ENCODE measurements at regions of chr16 and their contacts with region 1.

Region 1: DNA sequence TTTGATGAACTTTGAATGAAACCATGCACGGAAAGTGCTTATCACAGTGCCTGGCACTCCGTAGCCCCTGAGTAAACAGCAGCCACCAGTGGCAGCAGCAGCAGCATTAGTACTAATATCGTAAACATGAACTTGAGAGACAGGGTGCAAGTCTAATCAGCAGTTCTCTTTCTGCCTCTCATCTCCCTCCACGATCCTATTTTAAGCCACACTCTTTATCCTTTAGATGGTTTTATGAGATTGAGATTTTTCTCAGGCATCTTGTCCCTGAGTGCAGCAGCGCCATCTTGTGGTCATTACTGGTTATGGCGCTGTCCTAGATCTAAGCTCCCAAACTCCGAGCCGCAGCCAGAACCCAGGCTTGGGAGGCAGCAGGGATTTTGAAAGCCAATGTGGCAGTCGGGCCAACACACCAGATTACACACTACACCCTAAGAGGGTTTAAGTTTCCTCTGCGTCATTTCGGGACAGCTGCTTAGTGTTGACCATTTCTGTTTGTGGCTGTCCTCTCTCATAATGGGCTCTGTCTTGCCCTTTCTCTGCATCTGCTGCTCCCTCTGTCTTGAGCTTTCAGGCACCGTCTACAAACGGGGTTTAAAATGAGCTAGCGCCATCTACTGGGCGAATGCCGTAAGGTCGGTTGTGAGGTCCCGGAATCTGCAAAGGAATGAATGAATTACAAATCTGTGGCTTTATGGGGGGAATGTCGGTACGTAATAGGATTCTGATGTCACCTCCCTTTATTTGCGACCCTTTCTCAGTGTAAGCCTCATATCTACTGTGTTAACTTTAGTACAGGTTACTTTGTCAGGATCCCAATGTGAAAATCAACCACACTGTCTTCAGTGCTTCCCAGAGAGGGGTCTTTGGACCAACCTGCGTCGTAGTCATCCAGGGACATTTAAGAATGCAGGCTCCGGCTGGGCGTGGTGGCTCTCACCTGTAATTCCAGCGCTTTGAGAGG is 64.5 kb downstream of the CYLD start:
- DNase-seq: peak; percentile 69 to 93 (median 86)
- ATAC-seq: peak; percentile 96
- H3K4me3 ChIP-seq: peak overlapping the region; percentile 36 to 38
- H3K4me3 Mint-ChIP-seq: peak overlapping the region; percentile 81
- H3K27ac ChIP-seq: no peak overlapping the region
- H3K27ac Mint-ChIP-seq: peak overlapping the region; percentile 88
- H3K4me1 ChIP-seq: peaks cover 3% of the 10 kb centered on the region
- H3K4me1 Mint-ChIP-seq: peaks cover 11% of the 10 kb centered on the region
- H3K27me3 ChIP-seq: no peaks in the 10 kb centered on the region
- H3K27me3 Mint-ChIP-seq: no peaks in the 10 kb centered on the region
- CTCF ChIP-seq: peak; percentile 96

Region 2: GRCh38 chr16:50065624-50066481 is 740.5 kb before region 1 on chr16 and contains the start of gene HEATR3:
- CTCF ChIA-PET with region 1: interaction called, 3 read pairs
- POLR2A ChIA-PET with region 1: no interaction called
- intact Hi-C with region 1: loop called in 1 of 2 experiments (anchors 10 kb)
- DNase-seq: peak; percentile 88 to 97 (median 93)
- ATAC-seq: peak; percentile 86
- H3K4me3 ChIP-seq: peak within 1 kb of the TSS; percentile 78 to 92
- H3K4me3 Mint-ChIP-seq: peak within 1 kb of the TSS; percentile 93
- H3K27ac ChIP-seq: peak within 1 kb of the TSS; percentile 73 to 79
- H3K27ac Mint-ChIP-seq: peak within 1 kb of the TSS; percentile 92
- H3K4me1 ChIP-seq: peaks cover 17% of the 10 kb centered on the region
- H3K4me1 Mint-ChIP-seq: peaks cover 42% of the 10 kb centered on the region
- H3K27me3 ChIP-seq: no peaks in the 10 kb centered on the region
- H3K27me3 Mint-ChIP-seq: no peaks in the 10 kb centered on the region
- CTCF ChIP-seq: no peak
- total RNA-seq, gene HEATR3: 9.3 to 11.4 TPM

Region 3: GRCh38 chr16:50360033-50360778 is 446.2 kb before region 1 on chr16:
- CTCF ChIA-PET with region 1: interaction called, 12 read pairs
- POLR2A ChIA-PET with region 1: no interaction called
- intact Hi-C with region 1: loop called (anchors 5 kb)
- DNase-seq: no peak
- ATAC-seq: no peak
- H3K4me3 ChIP-seq: no peak overlapping the region
- H3K4me3 Mint-ChIP-seq: no peak overlapping the region
- H3K27ac ChIP-seq: no peak overlapping the region
- H3K27ac Mint-ChIP-seq: peak overlapping the region; percentile 87
- H3K4me1 ChIP-seq: peaks cover 30% of the 10 kb centered on the region
- H3K4me1 Mint-ChIP-seq: peaks cover 67% of the 10 kb centered on the region
- H3K27me3 ChIP-seq: no peaks in the 10 kb centered on the region
- H3K27me3 Mint-ChIP-seq: no peaks in the 10 kb centered on the region
- CTCF ChIP-seq: no peak

Region 4: DNA sequence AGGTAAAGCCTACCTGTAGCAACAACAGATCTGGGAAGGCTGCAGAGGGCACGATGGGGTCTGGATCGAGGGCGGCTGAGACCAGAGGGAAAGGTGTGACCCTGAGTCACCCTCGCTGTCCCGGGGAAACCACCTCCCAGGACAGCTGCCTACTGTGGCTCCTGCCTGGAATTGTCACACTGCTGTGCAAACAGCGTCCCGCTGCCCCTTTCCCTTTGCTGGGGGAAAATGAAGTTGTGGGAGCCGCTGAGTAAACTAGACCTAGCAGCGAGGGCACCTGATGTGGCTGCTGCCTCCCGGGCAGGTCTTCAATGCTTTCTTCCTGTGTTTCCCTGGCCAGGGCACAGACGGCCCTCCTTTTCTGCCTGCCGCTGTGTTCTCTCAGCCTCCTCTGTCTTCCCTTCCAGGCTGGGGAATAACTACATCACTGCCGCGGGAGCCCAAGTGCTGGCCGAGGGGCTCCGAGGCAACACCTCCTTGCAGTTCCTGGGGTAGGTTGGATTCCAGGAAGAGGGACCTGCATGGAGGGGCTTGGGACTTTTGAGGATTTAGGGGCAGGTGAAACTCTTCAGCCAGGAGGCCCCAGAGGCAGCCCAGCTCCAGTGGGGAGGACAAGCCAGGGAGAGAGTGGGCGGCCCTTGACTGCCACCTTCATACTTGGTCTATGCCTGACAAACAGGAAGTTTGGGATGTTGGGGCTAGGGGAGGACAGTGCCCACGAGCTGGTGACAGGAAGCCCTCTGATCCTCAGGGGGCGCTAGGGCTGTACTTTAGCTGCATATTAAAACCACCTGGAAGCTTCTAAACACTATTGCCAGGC is 86.7 kb before region 1 on chr16:
- CTCF ChIA-PET with region 1: interaction called, 20 read pairs
- POLR2A ChIA-PET with region 1: interaction called, 5 read pairs
- intact Hi-C with region 1: no loop called
- DNase-seq: peak in 6 of 9 experiments; percentile 23 to 71 (median 46)
- ATAC-seq: peak; percentile 67
- H3K4me3 ChIP-seq: no peak overlapping the region
- H3K4me3 Mint-ChIP-seq: no peak overlapping the region
- H3K27ac ChIP-seq: no peak overlapping the region
- H3K27ac Mint-ChIP-seq: no peak overlapping the region
- H3K4me1 ChIP-seq: peaks cover 26% of the 10 kb centered on the region
- H3K4me1 Mint-ChIP-seq: peaks cover 37% of the 10 kb centered on the region
- H3K27me3 ChIP-seq: no peaks in the 10 kb centered on the region
- H3K27me3 Mint-ChIP-seq: no peaks in the 10 kb centered on the region
- CTCF ChIP-seq: peak; percentile 15

Region 5: GRCh38 chr16:50791522-50791921 is 14.9 kb before region 1 on chr16:
- CTCF ChIA-PET with region 1: interaction called, 49 read pairs
- POLR2A ChIA-PET with region 1: interaction called, 4 read pairs
- intact Hi-C with region 1: no loop called
- DNase-seq: no peak
- ATAC-seq: no peak
- H3K4me3 ChIP-seq: no peak overlapping the region
- H3K4me3 Mint-ChIP-seq: no peak overlapping the region
- H3K27ac ChIP-seq: no peak overlapping the region
- H3K27ac Mint-ChIP-seq: no peak overlapping the region
- H3K4me1 ChIP-seq: no peaks in the 10 kb centered on the region
- H3K4me1 Mint-ChIP-seq: peaks cover 5% of the 10 kb centered on the region
- H3K27me3 ChIP-seq: no peaks in the 10 kb centered on the region
- H3K27me3 Mint-ChIP-seq: no peaks in the 10 kb centered on the region
- CTCF ChIP-seq: no peak